ENCODE measurements at regions of chr10 and their contacts with region 1.

Region 1: GRCh38 chr10:63157845-63158624 is 24.9 kb downstream of the NRBF2 start:
- DNase-seq: peak; percentile 41
- H3K4me3 ChIP-seq: no peak overlapping the region
- H3K27me3 ChIP-seq: no peaks in the 10 kb centered on the region
- CTCF ChIP-seq: peak; percentile 70

Region 2: DNA sequence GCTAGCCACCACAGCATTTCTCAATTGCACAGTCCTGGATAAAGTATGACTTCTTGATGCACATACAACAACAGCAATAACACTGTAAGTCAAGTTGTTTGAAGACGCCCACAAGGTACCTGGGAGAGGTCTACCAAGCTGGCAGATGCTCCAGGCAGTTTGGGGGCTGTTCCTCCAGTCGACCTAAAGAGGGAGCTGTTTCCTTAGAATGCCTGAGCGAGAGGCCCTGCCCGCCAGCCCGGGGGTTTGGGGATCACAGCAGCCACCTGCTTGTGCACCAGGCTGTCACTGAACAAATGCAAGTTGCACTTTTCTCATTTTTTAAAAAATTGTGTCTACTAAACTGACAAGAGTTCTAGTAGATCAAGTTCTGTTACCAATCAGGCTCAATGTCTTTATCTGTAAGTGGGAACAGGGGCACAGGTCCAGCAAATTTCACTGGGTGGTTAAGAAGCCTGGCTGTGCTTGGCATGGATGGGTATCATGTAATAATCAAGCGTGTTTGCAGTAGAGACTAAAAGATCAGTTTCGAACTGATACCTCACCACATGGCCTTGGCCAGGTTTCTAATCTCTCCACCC is 547.3 kb before region 1 on chr10:
- CTCF ChIA-PET with region 1: interaction called, 8 read pairs
- POLR2A ChIA-PET with region 1: interaction called, 10 read pairs
- DNase-seq: no peak
- H3K4me3 ChIP-seq: no peak overlapping the region
- H3K27me3 ChIP-seq: no peaks in the 10 kb centered on the region
- CTCF ChIP-seq: peak; percentile 84

Region 3: DNA sequence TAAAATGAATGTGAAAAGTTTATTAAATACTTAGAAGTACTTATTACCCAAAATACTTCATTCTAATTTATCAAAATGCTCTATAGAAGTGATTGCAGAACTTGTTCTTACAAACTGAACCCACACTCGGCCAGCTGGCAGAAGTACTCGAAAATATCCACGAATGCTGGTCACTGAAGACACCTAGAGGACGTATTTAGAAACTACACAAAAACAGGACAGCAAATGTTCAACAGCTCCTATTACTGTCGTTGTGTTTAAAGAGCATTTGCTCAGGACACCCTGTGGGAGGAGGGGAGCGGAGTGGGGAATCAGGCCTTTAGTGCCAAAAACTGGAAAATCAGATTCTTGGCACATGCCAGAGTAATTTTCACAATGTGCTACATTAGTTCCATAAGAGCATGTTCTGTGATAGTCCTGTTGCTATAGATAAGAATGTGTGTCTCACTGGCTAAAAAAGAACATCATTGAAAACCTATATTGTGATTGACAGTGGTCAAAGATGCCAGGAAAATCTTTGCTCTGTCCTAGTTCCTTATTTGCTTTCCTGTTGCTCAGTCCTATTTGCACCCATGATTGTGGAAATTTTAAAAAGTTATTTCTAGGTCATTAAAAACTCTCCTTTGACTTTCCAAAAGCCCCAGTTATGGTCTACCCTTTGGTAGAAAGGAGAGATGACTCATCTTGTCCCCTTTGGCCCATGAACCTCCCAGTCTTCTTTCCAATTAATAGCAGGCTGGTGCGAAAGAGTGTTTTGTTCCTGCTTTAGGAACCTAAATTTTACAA is 73.9 kb before region 1 on chr10:
- CTCF ChIA-PET with region 1: interaction called, 25 read pairs
- POLR2A ChIA-PET with region 1: no interaction called
- DNase-seq: peak; percentile 34
- H3K4me3 ChIP-seq: no peak overlapping the region
- H3K27me3 ChIP-seq: no peaks in the 10 kb centered on the region
- CTCF ChIP-seq: peak; percentile 64

Region 4: GRCh38 chr10:63145782-63146181 is 12.3 kb before region 1 on chr10:
- CTCF ChIA-PET with region 1: interaction called, 17 read pairs
- POLR2A ChIA-PET with region 1: no interaction called
- DNase-seq: no peak
- H3K4me3 ChIP-seq: no peak overlapping the region
- H3K27me3 ChIP-seq: no peaks in the 10 kb centered on the region
- CTCF ChIP-seq: no peak

Region 5: GRCh38 chr10:63241841-63242281 is 83.8 kb after region 1 on chr10:
- CTCF ChIA-PET with region 1: no interaction called
- POLR2A ChIA-PET with region 1: no interaction called
- DNase-seq: no peak
- H3K4me3 ChIP-seq: no peak overlapping the region
- H3K27me3 ChIP-seq: no peaks in the 10 kb centered on the region
- CTCF ChIP-seq: no peak

Region 6: GRCh38 chr10:63297941-63298340 is 139.9 kb after region 1 on chr10:
- CTCF ChIA-PET with region 1: no interaction called
- POLR2A ChIA-PET with region 1: no interaction called
- DNase-seq: no peak
- H3K4me3 ChIP-seq: no peak overlapping the region
- H3K27me3 ChIP-seq: no peaks in the 10 kb centered on the region
- CTCF ChIP-seq: no peak

Measured in BJ (cell line).